ENCODE measurements at regions of chr3 and their contacts with region 1.

Region 1: DNA sequence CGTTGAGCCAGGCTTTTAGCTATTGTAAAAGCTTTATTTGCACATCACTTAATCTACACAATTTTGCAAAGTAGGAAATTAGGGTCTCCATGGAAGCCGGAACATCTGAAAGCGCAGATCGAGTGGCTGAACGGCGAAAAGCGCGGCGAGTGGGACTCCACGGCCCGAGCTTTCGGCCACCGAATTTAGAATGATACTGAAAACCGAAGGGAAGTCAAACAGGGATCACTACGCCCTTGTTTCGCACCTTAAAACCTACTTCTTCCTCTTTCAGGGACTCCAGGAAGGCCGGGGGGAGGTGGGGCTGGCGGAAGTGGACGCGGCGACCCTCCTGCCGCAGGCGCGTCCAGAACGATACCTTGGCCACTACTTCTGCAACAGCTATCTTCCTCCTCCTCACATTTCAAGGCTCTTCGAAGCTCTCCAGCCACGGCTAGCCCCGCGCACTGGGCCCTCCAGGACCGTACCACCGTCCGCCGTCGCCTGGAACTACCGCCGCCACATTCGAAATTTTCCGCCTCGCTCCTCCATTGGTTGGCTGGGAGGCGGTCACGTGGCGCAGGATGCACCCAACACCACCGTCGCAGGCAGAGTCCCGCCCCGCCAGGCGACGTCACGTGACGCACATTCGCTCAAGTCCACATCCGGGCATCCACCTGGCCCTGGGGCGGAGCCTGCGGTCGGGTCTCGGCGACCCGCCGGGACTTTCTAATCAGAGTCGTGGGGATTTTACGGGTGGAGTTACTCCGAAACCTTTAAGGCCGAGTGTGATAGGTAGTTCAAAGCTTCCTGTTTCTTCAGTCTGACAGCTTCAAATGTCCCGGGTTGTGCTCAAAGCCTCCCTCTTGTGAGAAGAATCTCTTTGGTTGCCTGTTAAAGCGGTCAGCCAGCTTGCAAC is at the start of gene SGO1:
- DNase-seq: peak; percentile 100
- H3K4me3 ChIP-seq: peak within 1 kb of the TSS; percentile 70 to 78 (median 72)
- H3K27ac ChIP-seq: peak within 1 kb of the TSS; percentile 88 to 94 (median 89)
- H3K4me1 ChIP-seq: peaks cover 16 to 22% (median 19%) of the 10 kb centered on the region in 4 donors
- H3K27me3 ChIP-seq: no peaks in the 10 kb centered on the region
- CTCF ChIP-seq: peak in 1 of 3 experiments; percentile 35
- EP300 ChIP-seq: no peak
- POLR2A ChIP-seq: peak; percentile 68
- total RNA-seq, gene SGO1: 0.34 TPM in 1 of 4 donors, not detected in the others

Region 2: DNA sequence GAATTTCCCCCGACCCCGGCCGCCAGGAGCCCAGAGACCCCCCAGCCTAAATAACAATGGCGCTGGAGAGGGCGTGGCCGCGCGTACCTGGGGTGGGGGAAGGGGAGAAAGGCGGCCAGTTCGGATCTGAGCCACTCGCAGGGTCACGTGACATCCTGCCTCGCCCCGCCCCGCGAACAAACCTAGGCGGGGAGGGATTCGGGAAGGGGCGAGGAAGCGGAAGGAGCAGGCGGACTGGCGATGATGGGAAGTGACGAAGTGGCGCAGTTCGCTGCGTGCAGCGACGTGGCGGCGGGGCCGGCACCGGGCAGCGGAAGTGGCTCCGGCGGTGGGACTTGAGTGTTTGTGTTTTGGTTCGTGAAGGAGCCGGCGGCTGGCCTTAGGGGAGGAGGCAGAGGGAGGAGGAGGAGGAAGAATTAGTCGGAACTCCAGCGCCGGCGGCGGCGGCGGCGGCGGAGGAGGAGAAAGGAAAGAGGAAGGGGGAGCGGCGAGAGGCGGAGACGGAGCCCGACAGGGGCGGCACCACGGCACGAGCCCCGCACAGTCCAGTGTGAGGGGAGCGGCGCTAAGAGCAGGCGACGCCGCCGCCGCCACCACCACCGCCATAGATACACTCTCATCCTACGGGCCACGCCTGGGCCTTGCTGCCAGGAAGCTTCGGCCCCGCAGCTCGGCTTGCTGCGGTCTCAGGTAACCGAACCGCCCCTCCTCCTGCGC is 239.0 kb before region 1 on chr3 and contains the start of gene RAB5A:
- intact Hi-C with region 1: loop called (anchors 2 kb)
- DNase-seq: peak; percentile 99
- H3K4me3 ChIP-seq: peak within 1 kb of the TSS; percentile 80 to 97 (median 95)
- H3K27ac ChIP-seq: peak within 1 kb of the TSS; percentile 93 to 99 (median 98)
- H3K4me1 ChIP-seq: peaks cover 23 to 46% (median 44%) of the 10 kb centered on the region in 4 donors
- H3K27me3 ChIP-seq: no peaks in the 10 kb centered on the region
- CTCF ChIP-seq: no peak
- EP300 ChIP-seq: peak; percentile 88
- POLR2A ChIP-seq: no peak
- total RNA-seq, gene RAB5A: 74.8 to 92.1 (median 76.4) TPM